ENCODE measurements at regions of chr12 and their contacts with region 1.

Region 1: GRCh38 chr12:115895247-115895646 is 382.2 kb downstream of the MED13L start:
- DNase-seq: no peak
- H3K4me3 ChIP-seq: no peak overlapping the region
- H3K27ac ChIP-seq: no peak overlapping the region
- H3K4me1 ChIP-seq: no peaks in the 10 kb centered on the region
- H3K27me3 ChIP-seq: no peaks in the 10 kb centered on the region
- CTCF ChIP-seq: no peak
- POLR2A ChIP-seq: no peak

Region 2: GRCh38 chr12:114274131-114274530 is 1621.1 kb before region 1 on chr12:
- intact Hi-C with region 1: loop called (anchors 10 kb)
- DNase-seq: no peak
- H3K4me3 ChIP-seq: no peak overlapping the region
- H3K27ac ChIP-seq: no peak overlapping the region
- H3K4me1 ChIP-seq: no peaks in the 10 kb centered on the region
- H3K27me3 ChIP-seq: no peaks in the 10 kb centered on the region
- CTCF ChIP-seq: no peak
- POLR2A ChIP-seq: no peak

Measured in breast epithelium (tissue), 4 donors.